AG04449 (cell line): ENCODE measurements at regions of chr4 and their contacts with region 1.

Region 1: GRCh38 chr4:114015444-114015899 is 36.0 kb upstream of the ARSJ start:
- DNase-seq: peak; percentile 97
- H3K4me3 ChIP-seq: no peak overlapping the region
- CTCF ChIP-seq: no peak

Region 2: GRCh38 chr4:113979148-113979904 is 36.1 kb before region 1 on chr4 and contains the start of gene ARSJ:
- CTCF ChIA-PET with region 1: no interaction called
- POLR2A ChIA-PET with region 1: interaction called, 11 read pairs
- DNase-seq: no peak
- H3K4me3 ChIP-seq: peak within 1 kb of the TSS; percentile 83
- CTCF ChIP-seq: peak; percentile 1